H1 (cell line): ENCODE measurements at regions of chr16 and their contacts with region 1.

Region 1: GRCh38 chr16:65429494-65430181 is 307.8 kb upstream of the CDH11 start:
- DNase-seq: peak in 1 of 2 experiments; percentile 44
- H3K4me3 ChIP-seq: peak overlapping the region in 1 of 4 experiments; percentile 2; a peak in 1 of 8 replicates
- H3K27ac ChIP-seq: no peak overlapping the region
- H3K4me1 ChIP-seq: peaks cover 0 to 7% (median 4%) of the 10 kb centered on the region in 4 experiments; a peak in 3 of 7 replicates
- H3K27me3 ChIP-seq: no peaks in the 10 kb centered on the region; a peak in 1 of 7 replicates
- CTCF ChIP-seq: peak in 1 of 3 experiments; percentile 37; a peak in 1 of 4 replicates
- EP300 ChIP-seq: no peak
- POLR2A ChIP-seq: no peak
- RAD21 ChIP-seq: no peak

Region 2: DNA sequence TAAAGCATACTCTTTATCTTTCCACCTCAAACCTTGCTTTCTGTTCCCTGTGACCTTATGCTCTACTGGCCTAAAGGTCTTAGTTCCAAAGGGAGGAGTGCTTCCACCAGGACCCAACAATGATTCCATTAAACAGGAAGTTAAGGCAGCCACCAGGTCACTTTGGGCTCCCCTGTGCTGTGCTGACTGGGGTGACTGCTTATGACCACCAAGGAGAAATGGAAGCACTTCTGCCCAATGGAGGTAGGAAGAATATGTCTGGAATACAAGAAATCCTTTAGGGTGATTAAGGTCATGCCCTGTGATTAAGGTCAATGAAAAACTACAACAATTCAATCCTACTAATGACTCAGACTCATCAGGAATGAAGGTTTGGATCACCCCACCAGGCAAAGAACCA is 73.9 kb before region 1 on chr16:
- CTCF ChIA-PET with region 1: no interaction called
- POLR2A ChIA-PET with region 1: no interaction called
- DNase-seq: no peak
- H3K4me3 ChIP-seq: no peak overlapping the region
- H3K27ac ChIP-seq: no peak overlapping the region
- H3K4me1 ChIP-seq: no peaks in the 10 kb centered on the region
- H3K27me3 ChIP-seq: no peaks in the 10 kb centered on the region
- CTCF ChIP-seq: no peak
- EP300 ChIP-seq: no peak
- POLR2A ChIP-seq: no peak
- RAD21 ChIP-seq: no peak

Region 3: GRCh38 chr16:65414284-65414984 is 15.2 kb before region 1 on chr16:
- CTCF ChIA-PET with region 1: interaction called, 10 read pairs
- POLR2A ChIA-PET with region 1: no interaction called
- DNase-seq: no peak
- H3K4me3 ChIP-seq: no peak overlapping the region
- H3K27ac ChIP-seq: no peak overlapping the region
- H3K4me1 ChIP-seq: no peaks in the 10 kb centered on the region
- H3K27me3 ChIP-seq: peaks cover 0 to 1% (median 0%) of the 10 kb centered on the region in 4 experiments; a peak in 1 of 7 replicates
- CTCF ChIP-seq: no peak
- EP300 ChIP-seq: no peak
- POLR2A ChIP-seq: no peak
- RAD21 ChIP-seq: no peak